CD4-positive, alpha-beta T cell (primary cell): ENCODE measurements at regions of chr12 and their contacts with region 1.

Region 1: DNA sequence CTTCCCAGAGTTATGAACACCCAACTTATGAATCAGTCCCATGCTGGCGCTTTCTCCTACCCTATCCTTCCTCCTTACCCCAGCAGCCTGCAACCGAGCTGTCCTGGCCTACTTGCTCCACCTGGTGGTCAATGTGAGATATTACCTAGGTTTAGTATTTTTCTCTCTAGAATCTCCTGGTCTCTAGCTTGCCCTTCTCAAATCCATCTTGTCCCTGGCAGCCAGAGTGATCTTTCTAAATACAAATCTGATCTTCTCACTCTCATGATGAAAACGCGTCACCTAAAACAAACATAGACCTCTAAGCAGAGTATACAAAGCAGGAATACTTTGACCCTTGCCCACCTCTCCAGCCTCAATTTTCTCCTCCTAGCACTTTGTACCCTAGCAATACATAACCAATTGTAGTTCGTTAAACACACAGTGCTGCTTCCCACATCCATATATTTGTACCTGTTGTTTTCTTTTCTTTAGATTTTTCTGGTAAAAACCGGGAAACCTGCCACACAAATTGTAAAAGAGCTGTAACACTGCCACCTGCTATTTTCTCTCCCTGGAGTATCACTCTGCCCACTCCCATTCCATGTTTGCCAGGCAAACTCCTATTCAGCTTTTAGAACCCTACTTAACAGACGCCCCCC is 20.0 kb upstream of the TCP11L2 start:
- DNase-seq: peak; percentile 20 to 81 (median 37)
- ATAC-seq: peak; percentile 96
- H3K4me3 ChIP-seq: no peak overlapping the region
- H3K4me3 Mint-ChIP-seq: no peak overlapping the region
- H3K27ac ChIP-seq: no peak overlapping the region
- H3K27ac Mint-ChIP-seq: no peak overlapping the region
- H3K4me1 ChIP-seq: no peaks in the 10 kb centered on the region
- H3K4me1 Mint-ChIP-seq: no peaks in the 10 kb centered on the region
- H3K27me3 ChIP-seq: no peaks in the 10 kb centered on the region
- H3K27me3 Mint-ChIP-seq: peaks cover 10% of the 10 kb centered on the region
- CTCF ChIP-seq: peak; percentile 73

Region 2: DNA sequence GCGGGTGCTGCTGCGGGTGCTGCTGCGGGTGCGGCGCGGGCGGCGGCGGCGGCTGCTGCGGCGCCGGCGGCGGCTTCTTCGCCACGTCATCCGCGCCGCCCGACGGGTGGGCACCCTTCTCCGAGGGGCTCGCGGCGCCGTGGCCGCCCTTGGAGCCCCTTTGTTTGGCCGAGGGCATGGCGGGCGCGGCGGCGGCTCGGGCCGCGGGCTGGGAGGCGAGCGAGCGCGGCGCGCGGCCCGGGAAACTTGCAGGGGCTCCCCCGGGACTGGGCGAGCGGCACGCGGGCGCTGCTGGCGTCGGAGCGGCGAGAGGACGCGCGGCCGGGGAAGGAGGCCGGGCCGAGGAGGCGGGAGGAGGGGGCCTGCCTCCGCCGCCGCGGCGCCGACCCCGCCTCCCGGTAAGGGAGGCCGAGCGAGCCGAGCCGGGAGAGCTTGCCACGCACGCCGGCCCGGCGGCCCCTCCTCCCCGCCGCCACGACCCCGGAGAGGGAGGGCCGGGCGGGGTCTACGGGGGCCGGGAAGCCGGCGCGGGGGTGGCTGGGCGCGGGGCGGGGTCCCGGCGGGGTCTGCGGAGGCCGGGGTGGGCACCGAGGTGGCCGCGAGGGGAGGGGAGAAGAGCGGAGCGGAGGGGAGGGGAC is 34.8 kb before region 1 on chr12 and contains the start of gene CKAP4:
- CTCF ChIA-PET with region 1: interaction called, 10 read pairs
- POLR2A ChIA-PET with region 1: interaction called, 5 read pairs
- intact Hi-C with region 1: loop called (anchors 1 to 5 kb)
- DNase-seq: peak; percentile 11 to 88 (median 54)
- ATAC-seq: peak; percentile 51
- H3K4me3 ChIP-seq: peak within 1 kb of the TSS; percentile 75
- H3K4me3 Mint-ChIP-seq: peak within 1 kb of the TSS; percentile 89
- H3K27ac ChIP-seq: peak within 1 kb of the TSS; percentile 81 to 89
- H3K27ac Mint-ChIP-seq: peak within 1 kb of the TSS; percentile 94
- H3K4me1 ChIP-seq: peaks cover 37% of the 10 kb centered on the region
- H3K4me1 Mint-ChIP-seq: peaks cover 43% of the 10 kb centered on the region
- H3K27me3 ChIP-seq: no peaks in the 10 kb centered on the region
- H3K27me3 Mint-ChIP-seq: no peaks in the 10 kb centered on the region
- CTCF ChIP-seq: no peak
- total RNA-seq, gene CKAP4: 14.7 to 15.7 TPM

Region 3: GRCh38 chr12:106296193-106296877 is 13.8 kb after region 1 on chr12:
- CTCF ChIA-PET with region 1: interaction called, 19 read pairs
- POLR2A ChIA-PET with region 1: interaction called, 70 read pairs
- intact Hi-C with region 1: no loop called
- DNase-seq: no peak
- ATAC-seq: no peak
- H3K4me3 ChIP-seq: no peak overlapping the region
- H3K4me3 Mint-ChIP-seq: no peak overlapping the region
- H3K27ac ChIP-seq: no peak overlapping the region
- H3K27ac Mint-ChIP-seq: no peak overlapping the region
- H3K4me1 ChIP-seq: peaks cover 9% of the 10 kb centered on the region
- H3K4me1 Mint-ChIP-seq: peaks cover 18% of the 10 kb centered on the region
- H3K27me3 ChIP-seq: no peaks in the 10 kb centered on the region
- H3K27me3 Mint-ChIP-seq: no peaks in the 10 kb centered on the region
- CTCF ChIP-seq: no peak